Psoas muscle (tissue), 8 donors: ENCODE measurements at regions of chr17 and their contacts with region 1.

Region 1: GRCh38 chr17:74961657-74962490 is 10.7 kb downstream of the HID1 start:
- DNase-seq: peak; percentile 86 to 92
- ATAC-seq: peak; percentile 82 to 94 (median 90)
- H3K4me3 ChIP-seq: no peak overlapping the region
- H3K27ac ChIP-seq: no peak overlapping the region
- H3K4me1 ChIP-seq: no peaks in the 10 kb centered on the region
- H3K27me3 ChIP-seq: no peaks in the 10 kb centered on the region
- CTCF ChIP-seq: peak; percentile 85

Region 2: DNA sequence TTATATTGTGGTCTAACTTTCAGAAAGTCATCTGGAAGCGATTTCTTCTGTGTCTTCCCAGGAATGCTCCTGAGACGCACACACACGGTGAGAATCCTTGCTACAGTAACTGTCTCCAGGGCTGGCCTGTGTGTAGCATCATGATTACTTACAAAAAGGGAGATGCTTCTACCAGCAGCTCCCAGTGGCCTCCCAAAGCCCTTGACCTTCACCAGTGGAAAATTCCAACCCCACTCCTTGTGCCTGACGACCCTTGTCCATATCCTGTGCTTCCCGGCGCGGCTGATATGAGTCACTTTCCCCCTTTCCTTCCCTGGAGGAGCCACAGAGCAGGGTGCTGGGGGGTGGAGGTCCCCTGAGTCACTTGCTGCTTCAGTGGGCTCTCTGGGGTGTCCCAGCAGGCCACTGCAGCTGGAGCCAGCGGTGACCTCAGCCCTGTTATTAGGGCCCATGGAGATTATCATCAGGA is 163.6 kb before region 1 on chr17:
- intact Hi-C with region 1: loop called in 1 of 2 experiments (anchors 10 kb)
- DNase-seq: no peak
- ATAC-seq: no peak
- H3K4me3 ChIP-seq: no peak overlapping the region
- H3K27ac ChIP-seq: no peak overlapping the region
- H3K4me1 ChIP-seq: no peaks in the 10 kb centered on the region
- H3K27me3 ChIP-seq: no peaks in the 10 kb centered on the region
- CTCF ChIP-seq: no peak

Region 3: GRCh38 chr17:74923533-74924249 is 38.2 kb before region 1 on chr17:
- intact Hi-C with region 1: loop called in 1 of 2 experiments (anchors 2 kb)
- DNase-seq: peak; percentile 79 to 82
- ATAC-seq: peak; percentile 68 to 87 (median 74)
- H3K4me3 ChIP-seq: peak overlapping the region; percentile 54
- H3K27ac ChIP-seq: no peak overlapping the region
- H3K4me1 ChIP-seq: peaks cover 14% of the 10 kb centered on the region
- H3K27me3 ChIP-seq: peaks cover 0 to 89% (median 25%) of the 10 kb centered on the region in 3 donors
- CTCF ChIP-seq: peak; percentile 74

Region 4: DNA sequence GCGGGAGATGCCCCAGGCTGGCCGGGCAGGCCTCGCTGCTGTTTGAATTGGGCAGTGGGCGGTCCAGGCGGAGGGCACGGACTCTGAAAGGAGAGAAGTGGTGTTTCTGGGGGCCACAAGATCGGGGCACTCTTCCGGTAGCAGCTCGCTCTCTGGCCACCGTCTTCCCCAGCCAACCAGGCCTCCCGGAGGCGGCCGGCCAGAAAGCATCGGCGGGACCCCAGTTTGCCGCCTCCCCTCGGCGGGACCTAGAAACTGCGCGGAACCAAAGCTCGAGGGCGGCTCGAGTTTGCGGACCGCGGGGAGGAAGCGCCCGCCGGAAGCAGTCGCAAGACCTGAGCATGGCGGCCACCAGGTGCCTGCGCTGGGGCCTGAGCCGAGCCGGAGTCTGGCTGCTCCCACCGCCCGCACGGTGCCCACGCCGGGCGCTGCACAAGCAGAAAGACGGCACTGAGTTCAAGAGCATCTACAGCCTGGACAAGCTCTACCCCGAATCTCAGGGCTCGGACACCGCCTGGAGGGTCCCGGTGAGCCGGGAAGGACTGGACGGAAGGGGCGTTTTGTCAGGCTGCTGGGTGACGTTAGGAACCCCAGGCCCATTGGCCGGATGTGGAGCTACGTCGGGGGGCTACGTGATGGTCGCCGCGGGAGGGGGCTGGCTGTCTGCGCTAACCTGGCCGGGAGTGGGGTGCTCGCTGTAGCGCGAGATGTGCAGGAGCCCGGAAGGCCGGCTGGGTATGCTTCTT is 50.6 kb after region 1 on chr17 and contains the start of gene MRPL58:
- intact Hi-C with region 1: loop called (anchors 5 kb)
- DNase-seq: peak; percentile 86 to 92
- ATAC-seq: peak; percentile 94 to 97 (median 96)
- H3K4me3 ChIP-seq: peak within 1 kb of the TSS; percentile 84
- H3K27ac ChIP-seq: peak within 1 kb of the TSS; percentile 85
- H3K4me1 ChIP-seq: peaks cover 15% of the 10 kb centered on the region
- H3K27me3 ChIP-seq: no peaks in the 10 kb centered on the region
- CTCF ChIP-seq: peak; percentile 64
- total RNA-seq, gene MRPL58: 50.4 to 70.6 (median 59.2) TPM

Region 5: DNA sequence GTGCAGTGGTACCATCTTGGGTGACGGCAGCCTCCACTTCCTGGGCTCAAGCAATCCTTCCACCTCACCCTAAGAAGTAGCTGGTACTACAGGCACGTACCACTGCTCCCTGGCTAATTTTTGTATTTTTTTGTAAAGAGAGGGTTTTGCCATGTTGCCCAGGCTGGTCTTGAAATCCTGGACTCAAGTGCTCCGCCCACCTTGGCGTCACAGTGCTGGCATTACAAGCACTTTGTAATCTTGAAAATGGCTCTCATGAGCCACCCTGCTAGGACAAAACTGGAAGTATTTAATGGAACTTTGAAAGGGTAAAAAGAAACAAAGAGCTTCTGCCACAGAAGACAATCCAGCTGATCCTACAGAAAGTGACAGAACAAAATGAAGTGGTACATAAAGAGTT is 211.7 kb after region 1 on chr17:
- intact Hi-C with region 1: loop called in 1 of 2 experiments (anchors 10 kb)
- DNase-seq: no peak
- ATAC-seq: no peak
- H3K4me3 ChIP-seq: no peak overlapping the region
- H3K27ac ChIP-seq: no peak overlapping the region
- H3K4me1 ChIP-seq: no peaks in the 10 kb centered on the region
- H3K27me3 ChIP-seq: no peaks in the 10 kb centered on the region
- CTCF ChIP-seq: no peak